H1 (cell line): ENCODE measurements at regions of chr11 and their contacts with region 1.

Region 1: GRCh38 chr11:71928737-71929452 is at the start of gene RNF121:
- DNase-seq: peak; percentile 79 to 98
- H3K4me3 ChIP-seq: peak within 1 kb of the TSS; percentile 76 to 96 (median 84)
- H3K27ac ChIP-seq: peak within 1 kb of the TSS; percentile 99
- H3K4me1 ChIP-seq: peaks cover 0 to 4% (median 0%) of the 10 kb centered on the region in 4 experiments; a peak in 2 of 7 replicates
- H3K27me3 ChIP-seq: no peaks in the 10 kb centered on the region
- CTCF ChIP-seq: no peak
- EP300 ChIP-seq: no peak
- POLR2A ChIP-seq: peak; percentile 59 to 80; a peak in 2 of 3 replicates
- RAD21 ChIP-seq: no peak
- total RNA-seq, gene RNF121: 37.2 and 39.7 TPM in 2 replicates

Region 2: DNA sequence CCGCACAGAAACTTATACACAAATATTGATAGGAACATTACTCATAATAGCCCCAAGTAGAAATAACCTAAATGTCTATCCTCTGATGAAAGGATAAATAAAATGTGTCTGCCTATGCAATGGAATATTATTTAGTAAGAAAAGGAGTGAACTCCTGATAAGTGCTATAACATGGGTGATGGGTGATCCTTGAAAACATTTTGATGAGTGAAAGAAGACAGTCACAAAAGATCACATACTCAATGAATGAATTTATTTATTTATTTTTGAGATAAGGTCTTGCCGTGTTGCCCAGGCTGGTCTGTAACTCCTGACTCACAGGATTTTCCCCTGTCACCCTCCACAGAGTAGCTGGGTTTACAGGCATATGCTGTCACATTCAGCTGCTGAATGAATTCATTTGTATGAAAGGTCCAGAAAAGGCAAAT is 17.3 kb after region 1 on chr11:
- CTCF ChIA-PET with region 1: interaction called, 4 read pairs
- POLR2A ChIA-PET with region 1: interaction called, 11 read pairs
- DNase-seq: no peak
- H3K4me3 ChIP-seq: no peak overlapping the region
- H3K27ac ChIP-seq: no peak overlapping the region
- H3K4me1 ChIP-seq: no peaks in the 10 kb centered on the region
- H3K27me3 ChIP-seq: no peaks in the 10 kb centered on the region
- CTCF ChIP-seq: no peak
- EP300 ChIP-seq: no peak
- POLR2A ChIP-seq: no peak
- RAD21 ChIP-seq: no peak

Region 3: GRCh38 chr11:71955898-71956456 is 27.1 kb after region 1 on chr11:
- CTCF ChIA-PET with region 1: interaction called, 10 read pairs
- POLR2A ChIA-PET with region 1: interaction called, 4 read pairs
- DNase-seq: no peak
- H3K4me3 ChIP-seq: no peak overlapping the region
- H3K27ac ChIP-seq: no peak overlapping the region
- H3K4me1 ChIP-seq: no peaks in the 10 kb centered on the region
- H3K27me3 ChIP-seq: no peaks in the 10 kb centered on the region
- CTCF ChIP-seq: no peak
- EP300 ChIP-seq: no peak
- POLR2A ChIP-seq: no peak
- RAD21 ChIP-seq: no peak

Region 4: DNA sequence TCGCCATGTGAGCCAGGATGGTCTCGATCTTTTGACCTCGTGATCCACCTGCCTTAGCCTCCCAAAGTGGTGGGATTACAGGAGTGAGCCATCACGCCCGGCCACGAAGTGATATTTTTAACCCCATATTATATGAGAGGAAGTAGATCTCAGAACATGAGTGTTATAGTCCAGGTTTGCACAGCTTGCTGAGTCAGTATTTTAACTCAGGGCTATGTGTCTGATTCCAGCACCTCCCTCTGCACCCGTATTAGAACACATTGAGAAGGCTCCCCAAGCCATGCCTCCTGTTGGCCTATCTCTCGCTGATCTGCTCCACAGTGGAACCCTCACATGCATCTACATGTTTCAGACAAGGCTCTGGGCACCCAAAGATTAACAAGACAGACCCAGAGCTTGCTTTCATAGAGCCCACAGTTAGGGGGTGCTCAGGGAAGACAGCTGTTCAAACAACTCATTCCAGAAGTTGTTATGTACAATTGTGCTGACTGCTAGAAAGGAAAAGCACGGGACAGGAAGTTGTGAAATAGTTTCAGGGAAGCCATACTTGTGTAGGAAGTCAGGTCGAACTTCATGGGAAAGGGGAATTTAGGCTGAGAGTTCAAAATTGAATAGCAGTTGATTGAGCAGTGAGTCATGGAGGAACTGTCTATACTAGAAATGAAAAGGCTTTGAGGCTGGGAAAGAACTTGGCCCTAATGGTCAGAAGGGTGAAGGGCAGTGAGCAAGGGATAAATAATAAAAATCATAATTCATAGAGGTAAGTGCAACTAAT is 554.7 kb after region 1 on chr11:
- CTCF ChIA-PET with region 1: no interaction called
- POLR2A ChIA-PET with region 1: no interaction called
- DNase-seq: no peak
- H3K4me3 ChIP-seq: no peak overlapping the region
- H3K27ac ChIP-seq: no peak overlapping the region
- H3K4me1 ChIP-seq: no peaks in the 10 kb centered on the region
- H3K27me3 ChIP-seq: no peaks in the 10 kb centered on the region
- CTCF ChIP-seq: no peak
- EP300 ChIP-seq: no peak
- POLR2A ChIP-seq: no peak
- RAD21 ChIP-seq: no peak